AG04450 (cell line): ENCODE measurements at regions of chr2 and their contacts with region 1.

Region 1: DNA sequence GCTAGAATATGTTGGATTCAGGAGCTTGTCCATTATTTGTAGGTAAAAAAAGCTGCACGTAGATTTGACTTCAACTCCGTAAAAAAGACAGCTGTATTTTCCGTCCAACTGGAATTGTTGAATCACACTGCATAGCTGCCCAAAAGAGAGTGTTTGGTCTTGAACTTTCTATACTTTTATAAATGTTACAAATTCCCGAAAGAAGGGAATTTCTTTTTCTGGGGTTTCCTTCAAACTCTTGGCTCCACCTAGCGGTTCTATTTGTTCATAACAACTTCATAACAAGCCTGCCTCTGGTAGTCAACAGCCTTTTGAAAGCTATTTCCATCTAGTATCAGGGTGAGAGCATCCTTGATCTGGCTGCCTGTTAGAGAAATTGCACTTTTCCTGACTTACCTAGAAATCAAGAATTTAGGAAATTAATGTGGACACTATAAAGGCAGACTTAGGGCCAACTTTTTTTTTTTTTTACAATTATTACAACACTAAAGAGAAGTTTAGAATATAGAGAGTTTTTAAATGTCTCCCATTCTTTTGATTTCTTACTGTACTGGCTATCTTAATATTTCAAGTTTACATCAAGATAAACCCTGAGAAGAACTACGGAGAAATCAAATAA is 48.1 kb downstream of the TMEM185B start:
- DNase-seq: peak; percentile 48
- H3K4me3 ChIP-seq: no peak overlapping the region
- H3K27ac ChIP-seq: no peak overlapping the region
- H3K27me3 ChIP-seq: no peaks in the 10 kb centered on the region
- CTCF ChIP-seq: peak; percentile 70

Region 2: GRCh38 chr2:119702918-119703401 is 472.1 kb before region 1 on chr2:
- CTCF ChIA-PET with region 1: interaction called, 59 read pairs
- POLR2A ChIA-PET with region 1: no interaction called
- DNase-seq: no peak
- H3K4me3 ChIP-seq: no peak overlapping the region
- H3K27ac ChIP-seq: no peak overlapping the region
- H3K27me3 ChIP-seq: peaks cover 12% of the 10 kb centered on the region
- CTCF ChIP-seq: peak; percentile 98

Region 3: GRCh38 chr2:119782308-119783027 is 392.6 kb before region 1 on chr2:
- CTCF ChIA-PET with region 1: interaction called, 10 read pairs
- POLR2A ChIA-PET with region 1: no interaction called
- DNase-seq: no peak
- H3K4me3 ChIP-seq: no peak overlapping the region
- H3K27ac ChIP-seq: no peak overlapping the region
- H3K27me3 ChIP-seq: no peaks in the 10 kb centered on the region
- CTCF ChIP-seq: no peak

Region 4: GRCh38 chr2:120109186-120110061 is 65.6 kb before region 1 on chr2:
- CTCF ChIA-PET with region 1: interaction called, 87 read pairs
- POLR2A ChIA-PET with region 1: no interaction called
- DNase-seq: no peak
- H3K4me3 ChIP-seq: no peak overlapping the region
- H3K27ac ChIP-seq: no peak overlapping the region
- H3K27me3 ChIP-seq: no peaks in the 10 kb centered on the region
- CTCF ChIP-seq: peak; percentile 38

Region 5: DNA sequence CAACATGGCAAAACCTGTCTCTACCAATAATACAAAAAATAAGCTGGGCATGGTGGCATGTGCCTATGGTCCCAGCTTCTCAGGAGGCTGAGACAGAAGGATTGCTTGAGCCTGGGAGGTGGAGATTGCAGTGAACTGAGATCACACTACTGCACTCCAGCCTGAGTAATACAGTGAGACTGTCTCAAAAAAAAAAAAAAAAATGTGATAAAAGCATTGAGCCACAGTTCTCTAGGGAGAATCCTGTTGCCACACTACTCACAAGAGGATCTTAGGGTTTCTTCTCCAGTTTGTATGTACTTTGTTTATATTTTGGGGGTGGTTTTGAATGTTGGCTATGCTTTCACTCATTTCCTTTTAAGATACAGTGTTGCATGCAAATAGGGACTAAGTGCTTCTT is 13.9 kb before region 1 on chr2:
- CTCF ChIA-PET with region 1: interaction called, 19 read pairs
- POLR2A ChIA-PET with region 1: no interaction called
- DNase-seq: no peak
- H3K4me3 ChIP-seq: no peak overlapping the region
- H3K27ac ChIP-seq: no peak overlapping the region
- H3K27me3 ChIP-seq: no peaks in the 10 kb centered on the region
- CTCF ChIP-seq: no peak

Region 6: DNA sequence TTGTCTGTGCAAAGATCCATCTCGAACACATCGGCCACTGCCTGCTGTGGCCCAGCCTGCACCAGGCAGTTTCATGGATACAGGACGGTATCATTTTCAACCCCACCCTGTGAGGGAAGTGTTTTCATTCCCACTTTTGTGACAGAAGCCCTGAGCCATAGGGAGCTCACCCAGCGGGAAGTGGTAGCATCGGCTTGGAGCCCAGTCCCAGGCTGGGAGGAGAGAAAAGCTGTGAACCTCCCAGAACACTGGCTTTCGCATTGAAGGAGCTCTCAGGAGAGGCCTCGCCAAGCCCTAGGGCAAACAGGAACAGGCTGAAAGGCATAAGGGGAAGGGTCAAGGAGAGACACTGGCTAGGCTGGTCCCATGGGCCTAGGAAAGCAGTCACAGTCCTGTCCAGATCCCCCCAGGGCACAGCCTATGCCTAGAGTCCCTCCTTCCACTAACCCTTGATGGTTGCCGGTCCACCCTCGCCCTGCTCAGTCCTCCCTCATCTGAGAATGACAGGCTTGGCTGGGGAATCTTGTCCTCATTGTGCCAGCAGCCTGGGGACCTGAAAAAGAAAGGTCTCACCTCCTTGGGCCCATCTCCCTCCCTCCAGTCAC is 944.0 kb after region 1 on chr2:
- CTCF ChIA-PET with region 1: no interaction called
- POLR2A ChIA-PET with region 1: no interaction called
- DNase-seq: no peak
- H3K4me3 ChIP-seq: no peak overlapping the region
- H3K27ac ChIP-seq: no peak overlapping the region
- H3K27me3 ChIP-seq: peaks cover 40% of the 10 kb centered on the region
- CTCF ChIP-seq: no peak